HepG2 (cell line): ENCODE measurements at regions of chr15 and their contacts with region 1.

Region 1: GRCh38 chr15:45346381-45346780 is 32.0 kb downstream of the GATM start:
- DNase-seq: peak; percentile 28
- ATAC-seq: peak; percentile 76
- H3K4me3 ChIP-seq: no peak overlapping the region
- H3K27ac ChIP-seq: peak overlapping the region; percentile 61
- H3K4me1 ChIP-seq: peaks cover 74% of the 10 kb centered on the region
- H3K27me3 ChIP-seq: no peaks in the 10 kb centered on the region
- CTCF ChIP-seq: no peak
- EP300 ChIP-seq: no peak
- POLR2A ChIP-seq: no peak
- RAD21 ChIP-seq: no peak

Region 2: DNA sequence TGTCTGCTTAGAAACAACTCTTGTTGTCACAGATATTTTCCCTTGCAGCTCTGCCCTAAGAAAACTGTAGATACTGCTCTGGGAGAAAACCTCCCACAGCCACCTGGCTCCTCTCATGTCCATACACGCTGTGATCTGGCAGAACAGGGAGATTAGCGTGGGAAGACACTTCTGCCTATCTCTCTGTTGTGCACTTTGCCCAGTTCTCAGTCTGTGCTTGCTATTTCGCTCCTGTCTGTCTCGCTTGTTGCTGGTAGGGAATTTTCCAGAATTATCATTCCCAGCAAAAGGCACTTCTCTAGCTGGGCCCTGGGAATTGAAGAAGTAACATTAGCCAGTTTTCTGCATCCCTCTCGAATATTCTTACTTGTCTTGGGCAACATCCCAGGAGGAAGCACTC is 40.0 kb after region 1 on chr15:
- CTCF ChIA-PET with region 1: no interaction called
- POLR2A ChIA-PET with region 1: interaction called, 3 read pairs
- in situ Hi-C with region 1: loop called (anchors 5 kb)
- intact Hi-C with region 1: loop called (anchors 2 kb)
- DNase-seq: peak; percentile 47
- ATAC-seq: peak; percentile 65
- H3K4me3 ChIP-seq: no peak overlapping the region
- H3K27ac ChIP-seq: peak overlapping the region; percentile 69
- H3K4me1 ChIP-seq: peaks cover 76% of the 10 kb centered on the region
- H3K27me3 ChIP-seq: no peaks in the 10 kb centered on the region; a peak in 1 of 5 replicates
- CTCF ChIP-seq: no peak
- EP300 ChIP-seq: no peak; a peak in 1 of 4 replicates
- POLR2A ChIP-seq: no peak
- RAD21 ChIP-seq: no peak